Ovary (tissue), 10 donors: ENCODE measurements at regions of chr10 and their contacts with region 1.

Region 1: DNA sequence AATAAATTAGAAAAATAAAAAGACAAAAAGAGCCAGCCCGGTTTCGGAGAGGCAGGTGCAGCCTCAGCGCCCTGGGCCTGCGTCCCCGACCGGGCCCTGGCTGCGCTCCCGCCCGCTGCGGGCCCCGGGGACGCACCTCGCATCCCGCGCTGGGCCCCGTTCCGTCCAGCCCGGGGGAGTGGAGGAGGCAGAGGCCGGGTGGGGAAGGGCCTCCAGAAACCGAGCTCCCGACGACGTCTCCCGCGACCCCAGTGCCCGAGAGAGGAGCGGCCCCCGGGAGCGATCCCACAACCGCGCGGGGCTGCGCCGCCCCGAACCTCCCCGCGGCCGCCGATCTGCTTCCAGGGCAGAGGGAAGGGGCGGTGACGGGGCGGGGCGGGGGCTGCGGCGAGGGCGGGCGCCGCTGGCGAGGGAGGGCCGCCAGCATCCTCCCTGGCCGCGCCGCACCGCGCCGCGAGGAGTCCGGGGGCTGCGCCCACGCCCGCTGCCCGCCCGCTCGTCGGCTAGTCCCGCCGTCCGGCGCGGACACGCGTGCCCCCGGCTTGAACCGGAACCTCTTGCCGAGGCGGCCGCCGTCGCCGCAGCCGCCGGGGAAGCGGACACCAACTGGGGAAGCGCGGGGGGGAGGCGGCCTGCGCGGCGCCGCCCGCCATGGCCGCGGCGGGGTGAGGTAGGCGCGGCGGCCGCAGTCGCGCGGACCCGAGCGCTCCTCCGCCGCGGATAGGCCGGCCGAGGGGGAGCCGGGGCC is at the start of gene CCNY:
- DNase-seq: peak; percentile 76 to 86 (median 82)
- H3K4me3 ChIP-seq: peak within 1 kb of the TSS; percentile 98
- H3K27ac ChIP-seq: peak within 1 kb of the TSS; percentile 66 to 81
- H3K4me1 ChIP-seq: peaks cover 9% of the 10 kb centered on the region
- H3K27me3 ChIP-seq: no peaks in the 10 kb centered on the region
- CTCF ChIP-seq: no peak
- EP300 ChIP-seq: no peak
- POLR2A ChIP-seq: peak; percentile 65
- total RNA-seq, gene CCNY: 28.3 to 81.3 (median 60.9) TPM

Region 2: DNA sequence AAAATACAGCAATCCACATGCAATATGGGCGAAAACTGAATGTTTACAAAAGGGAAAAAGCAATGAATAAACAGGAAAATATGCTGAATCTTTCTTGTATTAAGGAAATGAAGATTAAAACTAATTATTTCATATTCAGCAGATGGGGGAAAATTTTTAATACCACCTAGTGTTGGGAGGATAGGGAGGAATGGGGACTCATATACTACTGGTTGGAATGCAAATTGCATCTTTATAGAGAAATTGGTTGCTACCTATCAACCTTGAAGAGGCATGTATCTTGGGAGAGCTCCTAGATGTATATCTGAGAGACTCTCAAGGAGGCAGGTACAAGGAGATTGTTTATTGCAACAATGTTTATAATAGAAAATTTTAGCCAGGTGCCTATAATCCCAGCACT is 108.2 kb before region 1 on chr10:
- intact Hi-C with region 1: no loop called
- DNase-seq: no peak
- H3K4me3 ChIP-seq: no peak overlapping the region
- H3K27ac ChIP-seq: no peak overlapping the region
- H3K4me1 ChIP-seq: no peaks in the 10 kb centered on the region
- H3K27me3 ChIP-seq: no peaks in the 10 kb centered on the region
- CTCF ChIP-seq: no peak
- EP300 ChIP-seq: no peak
- POLR2A ChIP-seq: no peak

Region 3: DNA sequence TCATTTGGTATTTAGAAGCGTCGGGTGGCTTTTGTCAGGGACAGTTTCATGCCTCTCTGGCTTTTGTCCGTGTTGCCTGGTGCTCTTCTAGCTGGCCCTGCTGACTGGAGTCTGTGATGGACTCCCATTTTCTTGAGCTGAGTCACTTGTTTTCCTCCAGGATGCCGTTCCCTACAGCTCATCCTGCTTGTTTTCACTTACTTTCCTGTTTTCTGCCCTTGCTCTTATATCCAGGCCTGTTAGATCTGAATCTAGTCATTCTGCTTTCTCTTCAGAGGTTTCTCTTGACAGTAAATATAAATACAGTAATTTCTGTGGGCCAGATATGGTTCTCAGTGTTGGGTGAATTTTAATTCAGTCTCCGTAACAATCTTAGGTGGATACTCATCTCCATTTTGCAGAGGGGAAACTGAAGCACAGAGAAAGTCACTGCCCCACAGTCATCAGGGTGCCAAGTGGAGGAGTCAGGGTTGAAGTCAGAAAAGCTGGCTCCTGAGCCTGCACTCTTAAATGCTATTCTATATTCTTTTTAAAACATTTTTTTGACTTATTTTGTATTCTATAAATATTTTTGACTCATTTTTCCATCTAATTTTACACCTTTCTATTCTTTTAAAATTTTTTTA is 85.4 kb after region 1 on chr10:
- intact Hi-C with region 1: loop called in 1 of 4 experiments (anchors 10 kb)
- DNase-seq: peak in 2 of 5 donors; percentile 44 to 58
- H3K4me3 ChIP-seq: no peak overlapping the region
- H3K27ac ChIP-seq: peak overlapping the region; percentile 31 to 82
- H3K4me1 ChIP-seq: peaks cover 17% of the 10 kb centered on the region
- H3K27me3 ChIP-seq: no peaks in the 10 kb centered on the region
- CTCF ChIP-seq: no peak
- EP300 ChIP-seq: no peak
- POLR2A ChIP-seq: no peak